CD8-positive, alpha-beta T cell (primary cell): ENCODE measurements at regions of chr11 and their contacts with region 1.

Region 1: DNA sequence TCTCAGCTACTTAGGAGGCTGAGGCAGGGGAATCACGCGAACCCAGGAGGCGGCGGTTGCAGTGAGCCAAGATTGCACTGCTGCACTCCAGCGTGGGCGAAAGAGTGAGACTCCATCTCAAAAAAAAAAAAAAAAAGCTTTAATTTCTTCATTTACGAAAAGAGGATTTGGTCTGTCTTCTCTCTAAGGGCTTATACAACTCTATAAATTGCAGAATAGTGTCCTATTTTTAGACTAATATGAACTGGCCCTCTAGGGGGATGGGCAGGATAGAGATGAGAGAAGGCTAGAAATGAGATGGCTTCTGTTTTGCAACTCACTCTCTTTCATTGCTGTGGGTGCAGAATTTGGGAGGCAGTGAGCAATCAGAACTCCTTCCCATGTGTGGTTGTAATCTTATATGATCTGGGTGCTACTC is 11.3 kb downstream of the MAML2 start:
- DNase-seq: no peak
- ATAC-seq: no peak
- H3K4me3 ChIP-seq: no peak overlapping the region
- H3K4me3 Mint-ChIP-seq: no peak overlapping the region
- H3K27ac ChIP-seq: no peak overlapping the region
- H3K27ac Mint-ChIP-seq: peak overlapping the region; percentile 66
- H3K4me1 ChIP-seq: peaks cover 78% of the 10 kb centered on the region
- H3K4me1 Mint-ChIP-seq: peaks cover 81% of the 10 kb centered on the region
- H3K27me3 ChIP-seq: no peaks in the 10 kb centered on the region
- H3K27me3 Mint-ChIP-seq: no peaks in the 10 kb centered on the region
- CTCF ChIP-seq: no peak

Region 2: GRCh38 chr11:96314326-96315020 is 17.2 kb before region 1 on chr11:
- CTCF ChIA-PET with region 1: no interaction called
- POLR2A ChIA-PET with region 1: interaction called, 4 read pairs
- intact Hi-C with region 1: loop called in 1 of 2 experiments (anchors 2 kb)
- DNase-seq: peak in 1 of 9 experiments; percentile 21
- ATAC-seq: no peak
- H3K4me3 ChIP-seq: no peak overlapping the region
- H3K4me3 Mint-ChIP-seq: peak overlapping the region; percentile 9
- H3K27ac ChIP-seq: peak overlapping the region in 1 of 2 experiments; percentile 23
- H3K27ac Mint-ChIP-seq: peak overlapping the region; percentile 81
- H3K4me1 ChIP-seq: peaks cover 62% of the 10 kb centered on the region
- H3K4me1 Mint-ChIP-seq: peaks cover 88% of the 10 kb centered on the region
- H3K27me3 ChIP-seq: no peaks in the 10 kb centered on the region
- H3K27me3 Mint-ChIP-seq: no peaks in the 10 kb centered on the region
- CTCF ChIP-seq: no peak

Region 3: DNA sequence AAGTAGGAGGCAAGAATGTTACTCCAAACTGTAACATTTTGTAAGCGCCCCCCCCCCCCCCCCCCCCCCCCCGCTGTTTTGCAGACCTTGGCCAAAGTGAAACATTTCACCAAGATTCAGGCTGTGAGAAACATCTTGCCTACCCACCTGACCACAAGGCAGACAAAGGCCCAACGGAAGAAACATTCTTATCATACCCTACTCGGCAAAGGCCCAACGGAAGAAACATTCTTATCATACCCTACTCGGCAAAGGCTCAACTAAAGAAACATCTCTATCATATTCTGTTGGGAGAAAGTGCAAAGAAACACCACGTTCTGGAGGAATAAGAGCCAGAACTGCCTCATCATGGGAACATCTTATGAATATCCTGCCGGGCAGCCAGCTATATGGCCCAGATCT is 175.2 kb after region 1 on chr11:
- CTCF ChIA-PET with region 1: no interaction called
- POLR2A ChIA-PET with region 1: no interaction called
- intact Hi-C with region 1: no loop called
- DNase-seq: no peak
- ATAC-seq: no peak
- H3K4me3 ChIP-seq: no peak overlapping the region
- H3K4me3 Mint-ChIP-seq: no peak overlapping the region
- H3K27ac ChIP-seq: no peak overlapping the region
- H3K27ac Mint-ChIP-seq: no peak overlapping the region
- H3K4me1 ChIP-seq: no peaks in the 10 kb centered on the region
- H3K4me1 Mint-ChIP-seq: no peaks in the 10 kb centered on the region
- H3K27me3 ChIP-seq: no peaks in the 10 kb centered on the region
- H3K27me3 Mint-ChIP-seq: peaks cover 3% of the 10 kb centered on the region
- CTCF ChIP-seq: no peak